ENCODE measurements at regions of chr11 and their contacts with region 1.

Region 1: GRCh38 chr11:17389211-17389956 is 925 bp upstream of the KCNJ11 start:
- DNase-seq: peak; percentile 82
- H3K4me3 ChIP-seq: peak overlapping the region; percentile 45 to 54
- H3K27ac ChIP-seq: no peak overlapping the region
- H3K4me1 ChIP-seq: peaks cover 3% of the 10 kb centered on the region
- H3K27me3 ChIP-seq: no peaks in the 10 kb centered on the region
- CTCF ChIP-seq: peak in 2 of 3 experiments; percentile 23 to 65
- POLR2A ChIP-seq: no peak

Region 2: GRCh38 chr11:17504330-17505107 is 115.1 kb after region 1 on chr11:
- intact Hi-C with region 1: loop called (anchors 5 kb)
- DNase-seq: peak; percentile 87
- H3K4me3 ChIP-seq: no peak overlapping the region
- H3K27ac ChIP-seq: no peak overlapping the region
- H3K4me1 ChIP-seq: no peaks in the 10 kb centered on the region
- H3K27me3 ChIP-seq: no peaks in the 10 kb centered on the region
- CTCF ChIP-seq: peak; percentile 54 to 79 (median 76)
- POLR2A ChIP-seq: no peak

Measured in testis (tissue), 5 donors.